ENCODE measurements at regions of chr4 and their contacts with region 1.

Region 1: GRCh38 chr4:138182838-138183426 is 59.2 kb downstream of the SLC7A11 start:
- DNase-seq: peak in 1 of 5 donors; percentile 8
- ATAC-seq: peak; percentile 39 to 80 (median 70)
- H3K4me3 ChIP-seq: no peak overlapping the region
- H3K27ac ChIP-seq: no peak overlapping the region
- H3K4me1 ChIP-seq: peaks cover 0 to 18% (median 1%) of the 10 kb centered on the region in 12 donors
- H3K27me3 ChIP-seq: no peaks in the 10 kb centered on the region
- CTCF ChIP-seq: peak; percentile 48 to 81 (median 69)
- POLR2A ChIP-seq: no peak

Region 2: GRCh38 chr4:136742333-136742732 is 1440.6 kb before region 1 on chr4:
- intact Hi-C with region 1: no loop called
- DNase-seq: no peak
- ATAC-seq: no peak
- H3K4me3 ChIP-seq: no peak overlapping the region
- H3K27ac ChIP-seq: no peak overlapping the region
- H3K4me1 ChIP-seq: no peaks in the 10 kb centered on the region
- H3K27me3 ChIP-seq: no peaks in the 10 kb centered on the region
- CTCF ChIP-seq: no peak
- POLR2A ChIP-seq: no peak

Region 3: DNA sequence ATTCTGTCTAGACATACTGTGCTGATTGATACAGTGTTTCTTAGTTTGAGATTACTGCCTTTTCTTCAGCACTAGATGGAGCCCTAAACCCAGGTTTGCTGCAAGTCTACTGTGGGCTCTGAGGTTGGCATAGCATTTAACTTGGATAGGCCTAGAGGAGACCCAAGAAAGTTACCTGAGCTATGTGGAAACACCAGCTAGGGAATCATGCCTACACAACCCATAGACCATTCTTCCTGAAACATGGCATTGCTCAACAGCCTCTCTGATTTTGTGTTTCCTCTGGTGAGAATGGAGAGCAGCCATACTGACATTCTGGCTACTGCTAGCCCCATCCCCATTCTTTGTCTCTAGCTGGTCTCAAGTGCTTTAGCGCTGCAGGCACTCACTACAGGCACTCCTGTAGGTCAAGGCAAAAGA is 363.0 kb before region 1 on chr4:
- intact Hi-C with region 1: loop called in 3 of 10 experiments (anchors 2 to 10 kb)
- DNase-seq: no peak
- ATAC-seq: peak in 3 of 4 donors; percentile 45 to 69 (median 49)
- H3K4me3 ChIP-seq: no peak overlapping the region
- H3K27ac ChIP-seq: no peak overlapping the region
- H3K4me1 ChIP-seq: no peaks in the 10 kb centered on the region
- H3K27me3 ChIP-seq: no peaks in the 10 kb centered on the region
- CTCF ChIP-seq: peak in 9 of 12 donors; percentile 14 to 42 (median 23)
- POLR2A ChIP-seq: no peak

Region 4: GRCh38 chr4:138090150-138090917 is 92.6 kb before region 1 on chr4:
- intact Hi-C with region 1: loop called in 6 of 10 experiments (anchors 5 to 10 kb)
- DNase-seq: peak in 2 of 5 donors; percentile 42 to 43
- ATAC-seq: peak in 3 of 4 donors; percentile 74 to 86 (median 74)
- H3K4me3 ChIP-seq: peak overlapping the region in 3 of 12 donors; percentile 18 to 32 (median 28)
- H3K27ac ChIP-seq: no peak overlapping the region
- H3K4me1 ChIP-seq: peaks cover 0 to 14% (median 2%) of the 10 kb centered on the region in 12 donors
- H3K27me3 ChIP-seq: no peaks in the 10 kb centered on the region
- CTCF ChIP-seq: peak; percentile 69 to 89 (median 80)
- POLR2A ChIP-seq: no peak

Region 5: DNA sequence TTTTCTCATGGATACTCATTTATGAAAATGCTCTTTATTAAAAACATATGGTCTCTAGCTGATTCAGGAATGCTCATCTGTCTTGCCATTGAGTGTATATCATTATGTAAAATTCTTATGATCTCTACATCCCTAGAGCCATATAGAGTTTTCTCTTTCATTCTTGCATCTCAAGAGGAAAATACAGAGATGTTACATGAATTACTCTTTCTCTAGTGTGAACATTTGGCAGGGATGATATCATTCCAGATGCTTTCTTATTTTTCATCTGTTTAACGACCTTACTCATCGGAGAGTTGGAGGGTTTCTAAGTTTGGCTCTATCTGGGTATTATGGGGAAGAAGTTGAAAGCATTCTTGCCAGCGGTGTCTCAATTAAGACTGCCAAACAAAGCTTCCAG is 262.2 kb after region 1 on chr4:
- intact Hi-C with region 1: no loop called
- DNase-seq: no peak
- ATAC-seq: no peak
- H3K4me3 ChIP-seq: no peak overlapping the region
- H3K27ac ChIP-seq: no peak overlapping the region
- H3K4me1 ChIP-seq: peaks cover 0 to under 1% (median 0%) of the 10 kb centered on the region in 12 donors
- H3K27me3 ChIP-seq: no peaks in the 10 kb centered on the region
- CTCF ChIP-seq: no peak
- POLR2A ChIP-seq: no peak

Measured in heart left ventricle (tissue), 16 donors.